ENCODE measurements at regions of chr11 and their contacts with region 1.

Region 1: GRCh38 chr11:73218106-73218829 is at the start of gene P2RY2:
- DNase-seq: peak; percentile 52
- H3K4me3 ChIP-seq: peak within 1 kb of the TSS; percentile 52 to 83 (median 79)
- H3K27ac ChIP-seq: no peak within 1 kb of the TSS
- H3K4me1 ChIP-seq: peaks cover 44% of the 10 kb centered on the region
- H3K27me3 ChIP-seq: no peaks in the 10 kb centered on the region
- CTCF ChIP-seq: peak; percentile 33 to 66
- total RNA-seq, gene P2RY2: 7.8 to 21.6 TPM

Region 2: GRCh38 chr11:73177778-73178577 is 40.3 kb before region 1 on chr11:
- CTCF ChIA-PET with region 1: no interaction called
- dilution Hi-C with region 1: no loop called
- in situ Hi-C with region 1: no loop called
- intact Hi-C with region 1: no loop called
- DNase-seq: peak; percentile 73
- H3K4me3 ChIP-seq: no peak overlapping the region
- H3K27ac ChIP-seq: no peak overlapping the region
- H3K4me1 ChIP-seq: peaks cover 21% of the 10 kb centered on the region
- H3K27me3 ChIP-seq: no peaks in the 10 kb centered on the region
- CTCF ChIP-seq: peak; percentile 54 to 89

Region 3: DNA sequence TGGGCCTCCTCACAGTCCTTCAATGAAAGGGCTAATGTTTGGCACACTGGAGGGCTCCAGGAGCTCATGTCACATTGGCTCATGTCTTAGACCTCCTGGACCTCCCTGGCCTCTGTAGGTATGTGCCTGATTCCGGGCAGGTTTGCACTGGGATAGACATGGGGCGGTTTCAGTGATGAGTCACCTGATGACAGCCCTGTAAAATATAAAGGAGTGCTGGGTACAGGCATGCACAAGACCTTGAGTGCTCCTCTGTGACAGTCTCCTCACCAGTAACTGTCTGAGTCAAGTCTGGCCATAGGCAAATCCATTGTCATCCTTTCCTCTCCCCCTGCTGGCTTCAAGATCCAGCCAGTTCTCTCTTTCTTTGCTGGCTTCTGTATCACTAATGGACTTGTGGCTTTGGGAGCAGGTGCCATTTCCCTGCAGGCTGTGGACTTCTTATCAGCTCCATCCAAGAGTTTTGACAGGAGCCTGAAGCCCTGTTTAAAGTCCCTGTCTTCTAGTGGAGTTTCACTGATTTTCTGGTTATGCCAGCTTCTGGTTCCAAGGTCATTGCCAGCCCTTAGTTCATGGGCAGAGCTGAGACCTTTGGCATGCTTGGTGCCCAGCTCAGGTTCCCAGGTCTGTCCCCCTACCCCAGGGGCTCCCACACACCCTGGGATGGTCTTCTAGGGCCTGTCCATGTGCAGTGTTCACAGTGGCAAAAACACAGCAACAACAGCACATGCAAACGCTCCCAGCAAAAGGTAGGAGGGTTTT is 22.9 kb before region 1 on chr11:
- CTCF ChIA-PET with region 1: no interaction called
- dilution Hi-C with region 1: no loop called
- in situ Hi-C with region 1: no loop called
- intact Hi-C with region 1: loop called (anchors 2 kb)
- DNase-seq: peak; percentile 98
- H3K4me3 ChIP-seq: no peak overlapping the region
- H3K27ac ChIP-seq: peak overlapping the region; percentile 69
- H3K4me1 ChIP-seq: peaks cover 67% of the 10 kb centered on the region
- H3K27me3 ChIP-seq: no peaks in the 10 kb centered on the region
- CTCF ChIP-seq: peak in 1 of 2 donors; percentile 51

Region 4: GRCh38 chr11:73236854-73237253 is 18.6 kb after region 1 on chr11:
- CTCF ChIA-PET with region 1: interaction called, 3 read pairs
- dilution Hi-C with region 1: no loop called
- in situ Hi-C with region 1: no loop called
- intact Hi-C with region 1: loop called (anchors 1 kb)
- DNase-seq: peak; percentile 48
- H3K4me3 ChIP-seq: no peak overlapping the region
- H3K27ac ChIP-seq: no peak overlapping the region
- H3K4me1 ChIP-seq: peaks cover 43% of the 10 kb centered on the region
- H3K27me3 ChIP-seq: no peaks in the 10 kb centered on the region
- CTCF ChIP-seq: peak; percentile 83 to 85

Region 5: GRCh38 chr11:73257342-73258103 is 39.3 kb after region 1 on chr11:
- CTCF ChIA-PET with region 1: interaction called, 25 read pairs
- dilution Hi-C with region 1: no loop called
- in situ Hi-C with region 1: no loop called
- intact Hi-C with region 1: no loop called
- DNase-seq: peak; percentile 84
- H3K4me3 ChIP-seq: no peak overlapping the region
- H3K27ac ChIP-seq: peak overlapping the region; percentile 48
- H3K4me1 ChIP-seq: peaks cover 17% of the 10 kb centered on the region
- H3K27me3 ChIP-seq: no peaks in the 10 kb centered on the region
- CTCF ChIP-seq: no peak

Region 6: GRCh38 chr11:73360336-73361013 is 142.2 kb after region 1 on chr11:
- CTCF ChIA-PET with region 1: no interaction called
- dilution Hi-C with region 1: no loop called
- in situ Hi-C with region 1: no loop called
- intact Hi-C with region 1: no loop called
- DNase-seq: no peak
- H3K4me3 ChIP-seq: no peak overlapping the region
- H3K27ac ChIP-seq: no peak overlapping the region
- H3K4me1 ChIP-seq: peaks cover 7% of the 10 kb centered on the region
- H3K27me3 ChIP-seq: no peaks in the 10 kb centered on the region
- CTCF ChIP-seq: peak; percentile 29 to 33

Measured in mammary epithelial cell (primary cell).